ENCODE measurements at regions of chr10 and their contacts with region 1.

Region 1: DNA sequence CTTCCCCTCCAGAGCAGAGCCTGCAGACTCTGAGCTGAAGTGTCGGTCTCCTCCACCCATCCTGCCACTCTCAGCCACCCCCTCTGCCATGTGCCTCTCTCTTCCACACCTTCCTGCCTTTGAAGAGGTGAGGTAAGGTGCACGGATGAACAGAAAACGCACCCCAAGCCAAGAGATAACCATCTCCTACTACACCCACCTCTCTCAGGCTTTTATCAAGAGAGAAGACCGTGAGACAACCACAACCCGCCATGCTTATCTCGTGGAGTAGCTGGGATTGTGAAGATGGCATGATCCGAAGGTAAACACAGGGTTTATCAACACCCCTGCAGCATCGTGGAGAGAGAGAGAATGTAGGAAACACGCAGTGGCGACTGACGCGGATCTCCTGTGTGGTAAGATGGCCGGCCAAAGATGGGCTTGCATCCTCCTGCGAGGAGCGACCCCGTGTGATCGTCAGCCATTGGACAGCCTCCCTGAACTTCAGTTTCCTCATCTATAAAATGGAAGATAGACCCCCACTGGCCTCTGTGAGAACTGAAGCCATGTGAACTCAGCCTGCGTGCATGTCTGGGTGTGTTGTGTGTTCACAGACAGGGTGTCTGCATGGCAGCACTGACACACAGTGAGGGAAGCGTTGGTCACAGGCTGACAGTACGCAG is 219.0 kb downstream of the DIP2C start:
- DNase-seq: peak; percentile 71 to 82 (median 78)
- H3K4me3 ChIP-seq: peak overlapping the region in 1 of 2 donors; percentile 40
- H3K4me3 Mint-ChIP-seq: peak overlapping the region; percentile 57 to 87 (median 79)
- H3K27ac ChIP-seq: peak overlapping the region; percentile 32
- H3K27ac Mint-ChIP-seq: peak overlapping the region; percentile 75 to 93 (median 91)
- H3K4me1 ChIP-seq: peaks cover 35% of the 10 kb centered on the region
- H3K4me1 Mint-ChIP-seq: peaks cover 23 to 40% (median 32%) of the 10 kb centered on the region in 4 donors
- H3K27me3 ChIP-seq: no peaks in the 10 kb centered on the region
- H3K27me3 Mint-ChIP-seq: no peaks in the 10 kb centered on the region

Region 2: GRCh38 chr10:178208-178607 is 292.3 kb before region 1 on chr10:
- CTCF ChIA-PET with region 1: interaction called, 5 read pairs
- POLR2A ChIA-PET with region 1: no interaction called
- intact Hi-C with region 1: loop called (anchors 1 kb)
- DNase-seq: peak in 3 of 5 donors; percentile 13 to 16 (median 13)
- H3K4me3 ChIP-seq: no peak overlapping the region
- H3K4me3 Mint-ChIP-seq: no peak overlapping the region
- H3K27ac ChIP-seq: no peak overlapping the region
- H3K27ac Mint-ChIP-seq: no peak overlapping the region
- H3K4me1 ChIP-seq: peaks cover 14% of the 10 kb centered on the region
- H3K4me1 Mint-ChIP-seq: peaks cover 13 to 24% (median 22%) of the 10 kb centered on the region in 4 donors
- H3K27me3 ChIP-seq: no peaks in the 10 kb centered on the region
- H3K27me3 Mint-ChIP-seq: no peaks in the 10 kb centered on the region

Region 3: DNA sequence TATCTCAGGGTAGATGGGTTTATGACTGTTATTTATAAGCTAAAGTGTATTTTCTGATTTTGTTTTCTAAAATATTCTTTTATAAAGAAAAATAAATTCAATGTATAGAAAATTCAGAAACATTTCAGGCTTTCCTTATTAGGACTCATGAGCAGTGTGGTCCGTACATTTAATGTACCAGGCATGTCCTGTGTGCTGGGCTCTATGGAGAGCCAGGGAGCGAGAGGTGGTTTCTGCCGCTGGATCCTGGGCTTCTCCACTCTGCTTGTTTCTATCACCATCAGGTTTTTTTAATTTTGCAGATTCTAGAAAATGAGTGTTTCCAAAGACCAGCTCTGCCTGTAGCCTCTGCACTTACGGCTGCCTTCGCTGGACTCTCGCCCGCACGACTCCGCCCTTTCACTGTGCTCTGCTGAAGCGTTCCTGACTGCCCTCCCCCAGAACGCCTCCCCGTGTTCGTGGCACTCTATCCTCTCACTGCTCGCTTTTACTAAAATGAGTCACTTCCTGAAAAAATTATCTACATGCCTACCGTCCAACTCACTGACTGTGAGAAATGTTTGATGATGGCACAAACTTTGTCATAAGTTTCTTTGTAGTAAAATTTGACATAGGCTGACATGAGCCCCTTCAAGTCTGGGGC is 146.7 kb before region 1 on chr10:
- CTCF ChIA-PET with region 1: no interaction called
- POLR2A ChIA-PET with region 1: no interaction called
- intact Hi-C with region 1: loop called (anchors 1 kb)
- DNase-seq: peak; percentile 31 to 63 (median 38)
- H3K4me3 ChIP-seq: peak overlapping the region; percentile 29 to 46
- H3K4me3 Mint-ChIP-seq: peak overlapping the region; percentile 77 to 88 (median 82)
- H3K27ac ChIP-seq: no peak overlapping the region
- H3K27ac Mint-ChIP-seq: peak overlapping the region; percentile 38 to 78 (median 65)
- H3K4me1 ChIP-seq: peaks cover 15% of the 10 kb centered on the region
- H3K4me1 Mint-ChIP-seq: peaks cover 13 to 26% (median 17%) of the 10 kb centered on the region in 4 donors
- H3K27me3 ChIP-seq: no peaks in the 10 kb centered on the region
- H3K27me3 Mint-ChIP-seq: no peaks in the 10 kb centered on the region

Region 4: GRCh38 chr10:380313-380955 is 90.0 kb before region 1 on chr10:
- CTCF ChIA-PET with region 1: no interaction called
- POLR2A ChIA-PET with region 1: no interaction called
- intact Hi-C with region 1: loop called (anchors 5 kb)
- DNase-seq: no peak
- H3K4me3 ChIP-seq: no peak overlapping the region
- H3K4me3 Mint-ChIP-seq: no peak overlapping the region
- H3K27ac ChIP-seq: no peak overlapping the region
- H3K27ac Mint-ChIP-seq: no peak overlapping the region
- H3K4me1 ChIP-seq: peaks cover 8% of the 10 kb centered on the region
- H3K4me1 Mint-ChIP-seq: peaks cover 5 to 21% (median 13%) of the 10 kb centered on the region in 4 donors
- H3K27me3 ChIP-seq: no peaks in the 10 kb centered on the region
- H3K27me3 Mint-ChIP-seq: no peaks in the 10 kb centered on the region

Region 5: GRCh38 chr10:451021-451471 is 19.4 kb before region 1 on chr10:
- CTCF ChIA-PET with region 1: interaction called, 8 read pairs
- POLR2A ChIA-PET with region 1: interaction called, 44 read pairs
- intact Hi-C with region 1: loop called (anchors 1 kb)
- DNase-seq: peak; percentile 81 to 86 (median 84)
- H3K4me3 ChIP-seq: peak overlapping the region in 1 of 2 donors; percentile 37
- H3K4me3 Mint-ChIP-seq: peak overlapping the region; percentile 72 to 89 (median 79)
- H3K27ac ChIP-seq: peak overlapping the region; percentile 14
- H3K27ac Mint-ChIP-seq: peak overlapping the region; percentile 88 to 95 (median 90)
- H3K4me1 ChIP-seq: peaks cover 65% of the 10 kb centered on the region
- H3K4me1 Mint-ChIP-seq: peaks cover 33 to 71% (median 56%) of the 10 kb centered on the region in 4 donors
- H3K27me3 ChIP-seq: no peaks in the 10 kb centered on the region
- H3K27me3 Mint-ChIP-seq: no peaks in the 10 kb centered on the region

Measured in CD4-positive, alpha-beta memory T cell (primary cell).